Tibial artery (tissue), 4 donors: ENCODE measurements at regions of chr10 and their contacts with region 1.

Region 1: GRCh38 chr10:78255796-78256638 is 222.4 kb downstream of the RPS24 start:
- DNase-seq: peak; percentile 80 to 90
- H3K4me3 ChIP-seq: no peak overlapping the region
- H3K27ac ChIP-seq: peak overlapping the region; percentile 69 to 72
- H3K4me1 ChIP-seq: peaks cover 0 to 15% (median 7%) of the 10 kb centered on the region in 4 donors
- H3K27me3 ChIP-seq: no peaks in the 10 kb centered on the region
- CTCF ChIP-seq: no peak

Region 2: DNA sequence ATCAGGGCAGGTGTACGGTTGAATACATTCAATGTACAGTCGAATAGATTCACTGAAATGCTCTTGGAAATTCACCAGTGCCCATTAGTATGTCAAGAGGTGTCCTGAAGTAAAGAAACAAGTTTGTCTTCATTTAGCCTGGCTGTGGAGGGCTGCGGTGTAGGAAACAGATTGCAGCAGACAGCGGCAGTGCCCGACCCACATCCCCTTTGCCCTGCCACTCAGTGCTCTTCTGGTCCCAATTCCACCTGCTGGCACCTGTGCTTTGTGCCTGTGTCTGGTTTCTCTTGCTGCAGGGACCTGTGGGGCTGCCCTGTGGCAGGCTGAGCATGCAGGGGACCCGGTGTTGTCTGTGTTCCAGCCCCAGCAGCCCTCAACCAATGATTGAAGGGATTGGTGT is 38.7 kb before region 1 on chr10:
- intact Hi-C with region 1: loop called (anchors 1 kb)
- DNase-seq: no peak
- H3K4me3 ChIP-seq: no peak overlapping the region
- H3K27ac ChIP-seq: no peak overlapping the region
- H3K4me1 ChIP-seq: peaks cover 0 to 28% (median 17%) of the 10 kb centered on the region in 4 donors
- H3K27me3 ChIP-seq: no peaks in the 10 kb centered on the region
- CTCF ChIP-seq: no peak

Region 3: GRCh38 chr10:79970062-79970461 is 1714.0 kb after region 1 on chr10:
- intact Hi-C with region 1: no loop called
- DNase-seq: no peak
- H3K4me3 ChIP-seq: no peak overlapping the region
- H3K27ac ChIP-seq: no peak overlapping the region
- H3K4me1 ChIP-seq: no peaks in the 10 kb centered on the region
- H3K27me3 ChIP-seq: no peaks in the 10 kb centered on the region
- CTCF ChIP-seq: no peak